ENCODE measurements at regions of chr10 and their contacts with region 1.

Region 1: DNA sequence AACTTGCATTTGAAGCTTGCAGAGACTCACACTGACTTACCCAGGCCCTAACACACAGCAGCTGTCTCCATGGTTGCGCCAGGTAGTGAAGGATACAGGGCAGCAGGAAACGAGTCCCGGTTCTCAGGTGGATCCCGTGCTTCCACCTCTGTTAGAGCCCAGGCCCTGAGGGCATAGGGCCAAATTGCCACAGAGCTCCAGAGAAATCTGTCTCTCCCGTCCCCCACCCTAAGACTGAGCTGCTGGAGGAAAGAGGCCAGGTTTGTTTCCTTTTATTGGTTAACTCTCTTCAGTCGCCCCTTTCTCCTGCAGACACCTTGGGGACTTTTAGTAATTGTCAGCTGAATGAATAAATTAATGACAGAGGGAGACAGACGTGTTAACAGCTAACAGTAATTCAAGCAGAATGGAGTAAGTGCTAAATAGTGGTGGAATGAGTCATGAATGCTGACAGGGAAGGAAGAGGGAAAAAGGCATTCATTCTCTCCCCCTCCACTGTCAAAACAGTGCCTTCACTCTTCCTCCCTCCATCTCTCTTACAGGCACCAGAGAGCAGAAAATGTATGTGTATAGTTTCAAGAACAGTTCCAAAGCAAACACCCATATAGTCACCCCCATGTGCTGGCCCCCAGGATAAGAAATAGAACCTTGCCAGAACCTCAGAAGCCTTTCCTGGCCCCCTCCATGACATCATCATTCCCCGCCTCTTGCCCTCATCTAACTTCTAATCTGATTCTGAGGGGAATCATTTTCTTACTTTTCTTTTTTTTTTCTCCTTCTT is 16.8 kb upstream of the DLG5 start:
- DNase-seq: peak; percentile 56
- H3K4me3 ChIP-seq: no peak overlapping the region
- CTCF ChIP-seq: no peak

Region 2: DNA sequence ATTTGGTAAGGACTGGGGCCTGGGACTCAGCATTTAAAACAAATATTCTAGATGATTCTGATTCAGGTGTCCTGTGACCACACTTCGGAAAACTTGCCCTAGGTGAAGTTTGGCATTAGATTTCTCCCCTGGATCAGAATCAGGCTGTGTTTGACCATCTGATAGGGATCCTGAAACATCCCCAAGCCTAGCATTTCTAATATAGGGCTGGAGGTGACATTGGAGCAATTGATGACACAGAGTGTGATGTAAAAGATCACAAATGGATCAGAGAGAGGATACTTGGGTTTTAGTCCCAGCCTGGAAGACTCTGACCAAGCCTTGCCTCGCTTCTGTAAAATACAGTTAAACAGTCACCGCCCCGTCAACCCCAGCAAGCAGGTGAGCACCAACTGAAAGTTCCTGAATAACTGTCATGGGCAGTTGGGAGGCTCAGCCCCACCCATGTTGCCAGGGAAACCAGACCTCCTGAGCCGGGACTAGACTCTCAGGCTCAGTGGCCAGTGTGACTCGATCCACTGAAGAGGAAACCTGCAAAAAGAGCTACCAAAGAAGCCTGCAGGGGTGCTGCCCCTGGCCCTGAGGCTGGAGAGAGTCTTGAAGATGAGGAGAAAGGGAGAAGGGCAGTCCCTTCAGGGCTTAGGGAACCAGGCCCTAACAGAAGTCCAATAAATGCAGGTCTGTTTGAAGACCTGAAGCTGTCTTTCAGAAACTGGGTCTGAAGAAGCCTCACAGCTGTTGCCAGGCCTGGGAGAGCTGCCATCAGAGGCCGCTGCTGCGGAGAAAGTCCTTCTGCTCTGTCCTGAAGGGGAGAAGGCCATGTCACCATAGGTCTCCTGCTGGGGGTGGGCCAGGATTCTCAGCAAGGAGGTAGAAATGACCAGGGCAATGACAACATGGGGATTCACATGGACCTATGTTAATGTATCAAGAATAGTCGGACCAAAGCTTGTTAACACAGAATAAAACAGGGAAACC is 179.6 kb before region 1 on chr10:
- in situ Hi-C with region 1: no loop called
- DNase-seq: no peak
- H3K4me3 ChIP-seq: no peak overlapping the region
- CTCF ChIP-seq: no peak

Region 3: GRCh38 chr10:77862595-77862994 is 80.7 kb before region 1 on chr10:
- in situ Hi-C with region 1: loop called (anchors 5 kb)
- DNase-seq: no peak
- H3K4me3 ChIP-seq: no peak overlapping the region
- CTCF ChIP-seq: no peak

Region 4: GRCh38 chr10:78015546-78015945 is 72.2 kb after region 1 on chr10:
- in situ Hi-C with region 1: loop called (anchors 5 kb)
- DNase-seq: no peak
- H3K4me3 ChIP-seq: no peak overlapping the region
- CTCF ChIP-seq: no peak

Measured in astrocyte of the cerebellum (primary cell).